ENCODE measurements at regions of chr3 and their contacts with region 1.

Region 1: DNA sequence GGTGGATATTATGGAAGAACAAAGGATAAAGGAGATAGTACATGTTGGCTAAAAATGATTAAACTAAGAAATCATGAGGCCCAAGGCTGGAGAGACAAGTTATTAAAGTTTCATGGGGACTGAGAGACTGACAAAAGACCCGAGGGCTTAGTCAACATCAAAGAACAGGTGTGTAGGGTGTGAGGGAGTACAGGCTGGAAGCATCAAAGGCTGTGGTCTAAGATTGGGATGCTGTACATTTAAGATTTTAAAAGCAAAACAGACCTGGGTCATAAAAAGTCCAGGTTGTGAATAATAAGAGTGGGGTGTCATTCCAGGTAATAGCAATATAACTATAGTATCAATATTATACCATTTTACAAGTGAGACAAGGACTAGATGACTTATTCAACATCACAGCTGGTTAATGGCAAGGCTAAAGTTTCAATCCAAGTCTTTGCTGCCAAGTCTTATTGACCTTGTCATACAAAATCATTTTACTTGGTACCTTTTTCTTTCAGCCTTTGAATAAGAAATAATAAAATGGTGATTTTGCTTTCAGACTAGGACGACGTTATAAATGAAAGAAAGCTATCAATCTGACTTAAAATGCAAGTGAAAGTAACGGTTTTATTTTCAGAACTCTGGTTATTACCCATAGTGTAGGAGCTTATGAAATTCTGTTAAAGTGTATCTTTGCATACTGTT is 211.6 kb downstream of the TNIK start:
- DNase-seq: no peak
- H3K4me3 Mint-ChIP-seq: no peak overlapping the region
- H3K27ac Mint-ChIP-seq: no peak overlapping the region
- H3K4me1 Mint-ChIP-seq: peaks cover 16% of the 10 kb centered on the region
- H3K27me3 Mint-ChIP-seq: no peaks in the 10 kb centered on the region

Region 2: DNA sequence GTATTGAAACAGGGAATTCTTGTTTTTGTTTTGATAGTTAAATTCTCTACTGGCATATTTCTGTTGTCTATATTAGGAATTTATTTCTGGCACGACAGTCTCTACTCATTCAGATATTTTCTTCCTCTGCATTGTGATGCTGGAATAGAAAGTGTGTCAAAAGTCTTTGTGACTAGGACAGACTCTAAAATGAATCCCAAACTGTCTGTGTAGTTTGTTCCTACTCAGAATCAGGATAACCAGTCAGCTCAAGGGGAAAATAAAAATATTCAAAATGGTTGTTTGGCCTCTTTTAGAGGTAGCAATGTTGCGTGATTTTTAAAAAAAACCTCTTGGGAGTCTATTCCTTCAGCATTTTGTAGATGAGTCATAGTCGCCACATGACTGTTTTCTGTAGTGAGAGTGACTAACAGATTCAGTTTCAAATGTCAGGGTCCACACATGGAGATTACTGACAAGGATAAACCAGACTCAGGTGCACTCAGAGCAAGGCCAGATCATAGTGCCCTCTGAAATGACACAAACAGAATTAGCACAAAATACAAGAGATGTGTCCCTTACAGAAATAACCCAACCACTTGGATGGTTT is 675.8 kb before region 1 on chr3:
- intact Hi-C with region 1: loop called (anchors 2 kb)
- DNase-seq: no peak
- H3K4me3 Mint-ChIP-seq: no peak overlapping the region
- H3K27ac Mint-ChIP-seq: no peak overlapping the region
- H3K4me1 Mint-ChIP-seq: peaks cover 14% of the 10 kb centered on the region
- H3K27me3 Mint-ChIP-seq: peaks cover 19% of the 10 kb centered on the region

Region 3: GRCh38 chr3:170740726-170741591 is 507.6 kb before region 1 on chr3:
- intact Hi-C with region 1: no loop called
- DNase-seq: no peak
- H3K4me3 Mint-ChIP-seq: no peak overlapping the region
- H3K27ac Mint-ChIP-seq: no peak overlapping the region
- H3K4me1 Mint-ChIP-seq: no peaks in the 10 kb centered on the region
- H3K27me3 Mint-ChIP-seq: peaks cover 4% of the 10 kb centered on the region

Region 4: DNA sequence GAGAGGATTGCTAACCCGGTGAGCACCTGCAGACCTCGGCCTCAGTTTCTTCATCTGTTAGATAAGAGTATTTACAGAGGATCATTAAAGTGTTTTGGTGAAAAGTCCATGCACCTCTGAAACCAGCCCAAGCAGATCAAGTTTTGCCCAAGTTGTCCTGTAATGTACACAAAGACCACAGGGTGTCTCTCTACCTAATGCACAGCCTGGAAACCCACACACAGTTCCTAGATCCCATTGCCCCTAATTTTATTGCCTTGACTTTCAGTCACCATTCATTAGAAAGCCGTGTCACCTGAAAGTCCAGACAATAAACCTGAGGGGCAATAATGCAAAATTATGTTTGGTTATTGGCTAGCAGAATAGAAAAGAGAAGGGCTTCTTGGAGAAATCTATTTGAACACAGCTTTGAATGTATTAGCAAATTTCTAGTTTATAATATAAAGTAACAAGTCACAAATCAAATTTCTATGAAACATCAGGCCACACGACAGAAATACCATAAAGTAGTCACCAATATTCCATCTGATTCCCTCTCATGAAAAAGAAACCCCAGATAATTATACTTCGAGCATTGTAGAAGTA is 60.8 kb before region 1 on chr3:
- intact Hi-C with region 1: loop called (anchors 1 kb)
- DNase-seq: no peak
- H3K4me3 Mint-ChIP-seq: no peak overlapping the region
- H3K27ac Mint-ChIP-seq: no peak overlapping the region
- H3K4me1 Mint-ChIP-seq: peaks cover 56% of the 10 kb centered on the region
- H3K27me3 Mint-ChIP-seq: no peaks in the 10 kb centered on the region

Region 5: DNA sequence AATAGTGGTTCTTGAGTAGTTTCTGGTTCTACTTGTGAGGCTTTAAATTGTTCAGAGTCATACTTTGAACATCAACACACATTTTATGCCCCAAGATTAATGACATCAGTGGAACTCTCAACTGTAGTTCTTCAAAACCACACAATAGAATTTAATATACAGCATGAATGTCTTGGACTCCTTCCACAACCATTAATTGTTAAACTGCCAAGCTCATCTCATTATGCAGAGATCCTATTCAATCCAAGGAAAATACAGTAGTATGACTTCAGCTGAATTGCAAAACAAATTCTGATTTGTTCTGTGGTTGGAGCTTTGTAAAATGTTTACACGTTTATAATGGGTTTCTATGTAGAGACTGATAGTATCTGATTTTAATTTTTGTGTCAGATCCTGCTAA is 22.9 kb before region 1 on chr3:
- intact Hi-C with region 1: loop called (anchors 1 kb)
- DNase-seq: no peak
- H3K4me3 Mint-ChIP-seq: no peak overlapping the region
- H3K27ac Mint-ChIP-seq: no peak overlapping the region
- H3K4me1 Mint-ChIP-seq: peaks cover 58% of the 10 kb centered on the region
- H3K27me3 Mint-ChIP-seq: no peaks in the 10 kb centered on the region

Region 6: GRCh38 chr3:171269542-171269941 is 21.0 kb after region 1 on chr3:
- intact Hi-C with region 1: loop called (anchors 1 kb)
- DNase-seq: no peak
- H3K4me3 Mint-ChIP-seq: no peak overlapping the region
- H3K27ac Mint-ChIP-seq: peak overlapping the region; percentile 31
- H3K4me1 Mint-ChIP-seq: peaks cover 76% of the 10 kb centered on the region
- H3K27me3 Mint-ChIP-seq: no peaks in the 10 kb centered on the region

Region 7: DNA sequence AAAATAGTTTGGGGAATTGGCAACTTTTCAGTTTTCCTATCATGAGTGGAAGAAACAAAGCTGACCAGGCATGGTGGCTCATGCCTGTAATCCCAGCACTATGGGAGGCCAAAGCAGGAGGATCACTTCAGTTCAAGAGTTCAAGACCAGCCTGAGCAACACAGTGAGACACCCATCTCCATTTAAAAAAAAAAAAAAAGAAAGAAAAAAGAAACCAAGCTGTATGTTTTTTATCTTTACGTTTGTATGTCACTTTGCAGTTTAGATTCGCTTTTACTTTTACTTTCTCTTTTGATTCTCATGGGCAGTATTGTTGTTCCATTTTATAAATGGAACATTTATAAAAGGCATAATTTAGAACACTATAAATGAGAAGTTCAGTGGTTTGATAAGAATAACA is 242.8 kb after region 1 on chr3:
- intact Hi-C with region 1: loop called (anchors 1 kb)
- DNase-seq: no peak
- H3K4me3 Mint-ChIP-seq: peak overlapping the region; percentile 71
- H3K27ac Mint-ChIP-seq: peak overlapping the region; percentile 67
- H3K4me1 Mint-ChIP-seq: peaks cover 55% of the 10 kb centered on the region
- H3K27me3 Mint-ChIP-seq: no peaks in the 10 kb centered on the region

Measured in activated T-helper 1 cell treated with anti-CD3 and anti-CD28 coated beads, Interleukin-12 subunit alpha, Interleukin-12 subunit beta, Interleukin-2, Interleukin-4 antibody, amounts not matched to agents 30 ng/mL and 10 ng/mL and 1 ng/mL, durations not matched to agents 14 hours and 24 hours and 36 hours (primary cell).